Heart right ventricle (tissue), 16 donors: ENCODE measurements at regions of chr9 and their contacts with region 1.

Region 1: DNA sequence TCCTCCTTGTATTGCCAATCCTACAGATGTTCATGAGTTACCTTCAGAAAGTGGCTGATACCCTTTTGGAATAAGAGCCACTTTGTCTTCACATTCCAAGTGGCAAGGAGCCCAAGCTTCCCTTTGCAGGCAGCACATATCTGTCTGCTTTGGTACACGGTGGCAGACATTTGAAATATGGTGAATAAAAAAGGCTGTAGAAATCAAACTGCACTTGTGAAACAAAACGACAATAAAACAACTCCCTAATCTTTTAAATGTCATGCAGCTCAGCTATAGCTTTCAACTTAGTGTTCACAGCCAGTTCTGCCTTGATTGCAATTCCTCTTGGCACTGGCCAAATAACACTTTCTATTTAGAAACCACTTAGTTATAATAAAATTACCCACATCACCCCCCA is 35.0 kb upstream of the DMAC1 start:
- DNase-seq: no peak
- ATAC-seq: no peak
- H3K4me3 ChIP-seq: no peak overlapping the region
- H3K27ac ChIP-seq: no peak overlapping the region
- H3K4me1 ChIP-seq: peaks cover 0 to 5% (median 0%) of the 10 kb centered on the region in 9 donors
- H3K27me3 ChIP-seq: no peaks in the 10 kb centered on the region
- CTCF ChIP-seq: no peak

Region 2: GRCh38 chr9:7510199-7510598 is 324.3 kb before region 1 on chr9:
- intact Hi-C with region 1: no loop called
- DNase-seq: no peak
- ATAC-seq: no peak
- H3K4me3 ChIP-seq: no peak overlapping the region
- H3K27ac ChIP-seq: peak overlapping the region in 4 of 10 donors; percentile 28 to 61 (median 41)
- H3K4me1 ChIP-seq: peaks cover 0 to 19% (median 0%) of the 10 kb centered on the region in 9 donors
- H3K27me3 ChIP-seq: no peaks in the 10 kb centered on the region
- CTCF ChIP-seq: no peak

Region 3: DNA sequence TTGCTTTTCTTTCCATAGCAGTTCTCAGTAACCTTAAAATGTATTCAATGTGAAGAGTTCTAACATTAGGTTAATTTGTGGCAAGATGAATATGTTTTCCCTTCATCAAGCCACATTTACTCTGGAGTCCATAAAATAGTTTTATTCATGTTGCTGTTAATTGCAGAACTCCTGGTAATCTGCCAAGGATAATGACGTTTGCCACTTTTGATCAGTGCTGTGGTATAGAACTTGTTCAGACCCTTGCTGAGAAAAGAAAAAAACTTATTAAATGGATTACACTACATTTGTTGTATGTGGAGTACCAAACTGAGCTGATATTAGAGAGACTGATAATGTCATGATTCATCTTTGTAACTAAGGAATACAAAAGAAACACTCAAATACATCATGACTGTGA is 177.4 kb after region 1 on chr9:
- intact Hi-C with region 1: no loop called
- DNase-seq: no peak
- ATAC-seq: no peak
- H3K4me3 ChIP-seq: no peak overlapping the region
- H3K27ac ChIP-seq: no peak overlapping the region
- H3K4me1 ChIP-seq: no peaks in the 10 kb centered on the region
- H3K27me3 ChIP-seq: no peaks in the 10 kb centered on the region
- CTCF ChIP-seq: no peak

Region 4: GRCh38 chr9:8070779-8071444 is 236.4 kb after region 1 on chr9:
- intact Hi-C with region 1: loop called in 1 of 10 experiments (anchors 5 kb)
- DNase-seq: no peak
- ATAC-seq: no peak
- H3K4me3 ChIP-seq: no peak overlapping the region
- H3K27ac ChIP-seq: no peak overlapping the region
- H3K4me1 ChIP-seq: no peaks in the 10 kb centered on the region
- H3K27me3 ChIP-seq: no peaks in the 10 kb centered on the region
- CTCF ChIP-seq: no peak